ENCODE measurements at regions of chr1 and their contacts with region 1.

Region 1: DNA sequence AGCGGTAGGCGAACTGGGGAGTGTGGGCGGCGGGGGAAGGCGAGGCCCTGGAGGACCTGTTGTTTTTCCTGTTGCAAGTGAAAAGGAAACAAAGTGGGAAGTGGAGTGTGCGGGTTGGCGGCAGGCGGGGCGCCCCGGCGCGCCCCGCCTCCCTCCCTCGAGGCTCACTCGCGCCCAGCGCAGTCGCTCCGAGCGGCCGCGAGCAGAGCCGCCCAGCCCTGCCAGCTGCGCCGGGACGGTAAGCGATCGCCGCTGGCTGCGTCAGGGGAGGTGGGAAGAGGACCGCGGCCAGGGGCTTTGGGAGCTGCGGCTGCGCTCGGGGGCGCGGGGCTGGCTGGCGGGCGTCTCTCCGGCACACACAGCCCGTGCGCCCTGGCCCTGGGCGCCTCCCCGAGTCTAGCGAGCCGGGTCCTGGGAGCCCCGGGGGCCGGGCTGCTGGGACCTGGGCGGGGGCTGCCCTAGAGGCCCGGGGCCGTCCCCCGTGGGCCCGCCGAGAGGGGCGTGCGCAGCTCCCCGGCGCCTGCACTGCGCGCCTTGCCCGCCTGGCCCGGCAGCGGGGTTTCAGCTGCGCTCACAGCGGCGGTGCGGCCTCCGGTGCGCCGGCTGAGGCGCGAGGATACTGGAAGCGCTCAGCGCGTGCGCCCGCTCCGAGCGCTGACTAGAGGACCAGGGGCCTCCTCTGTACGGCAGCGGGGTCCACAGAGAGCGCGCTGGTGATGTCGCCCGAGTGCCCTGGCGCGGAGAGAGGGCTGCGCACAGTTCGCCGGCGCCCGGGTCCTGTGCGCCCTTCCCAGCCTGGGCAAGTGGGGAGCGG is at the start of gene PIK3CD:
- DNase-seq: peak; percentile 31
- H3K4me3 Mint-ChIP-seq: peak within 1 kb of the TSS; percentile 95
- H3K27ac Mint-ChIP-seq: peak within 1 kb of the TSS; percentile 97
- H3K4me1 Mint-ChIP-seq: peaks cover 45% of the 10 kb centered on the region
- H3K27me3 Mint-ChIP-seq: no peaks in the 10 kb centered on the region
- total RNA-seq, gene PIK3CD: 287 and 291 TPM in 2 replicates

Region 2: DNA sequence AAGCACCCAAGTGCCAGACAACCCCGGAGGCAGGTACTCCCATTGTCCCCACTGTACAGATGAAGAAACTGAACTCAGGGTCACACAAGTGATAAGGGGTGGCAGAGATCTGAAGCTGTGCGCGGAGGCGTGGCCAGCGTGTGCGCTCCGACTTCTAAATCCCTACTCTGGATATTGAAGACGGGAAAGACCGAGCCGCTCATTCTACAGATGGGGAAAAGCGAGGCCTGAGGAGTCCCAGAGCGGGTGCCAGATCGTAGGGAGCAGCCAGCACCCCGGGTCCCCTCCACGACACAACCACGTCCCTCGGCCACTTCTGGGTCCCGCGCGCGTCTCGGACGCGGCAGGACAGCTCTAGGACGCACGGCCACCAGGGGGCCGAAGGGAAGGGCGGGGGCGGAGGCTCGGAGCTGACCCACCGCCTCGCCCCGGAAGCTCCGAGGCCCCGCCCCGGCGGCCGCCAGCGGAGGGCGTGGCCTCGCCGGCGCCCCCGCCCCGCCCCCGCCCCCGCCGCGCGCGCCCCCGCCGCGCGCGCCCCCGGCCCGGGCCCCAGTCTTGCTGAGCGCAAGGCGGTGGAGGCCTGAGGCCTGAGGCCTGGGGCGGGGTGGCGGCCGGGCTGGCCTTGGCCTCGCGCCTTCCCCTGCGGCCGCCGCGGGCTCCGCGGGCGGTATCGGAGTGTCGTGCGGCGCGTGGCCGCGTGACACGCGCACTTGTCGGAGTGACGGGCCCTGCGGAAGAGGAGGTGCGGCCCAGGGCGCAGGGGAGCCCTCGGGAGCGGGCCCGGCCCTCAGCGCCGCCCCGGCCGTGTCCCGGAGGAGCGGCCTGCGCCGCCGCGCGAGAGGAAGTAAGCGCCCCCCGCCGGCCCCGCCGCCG is 417.3 kb before region 1 on chr1 and contains the start of gene H6PD:
- intact Hi-C with region 1: loop called (anchors 10 kb)
- DNase-seq: peak; percentile 82
- H3K4me3 Mint-ChIP-seq: peak within 1 kb of the TSS; percentile 94
- H3K27ac Mint-ChIP-seq: peak within 1 kb of the TSS; percentile 98
- H3K4me1 Mint-ChIP-seq: peaks cover 36% of the 10 kb centered on the region
- H3K27me3 Mint-ChIP-seq: peaks cover 3% of the 10 kb centered on the region
- total RNA-seq, gene H6PD: 15.7 TPM in 2 replicates

Region 3: GRCh38 chr1:9275567-9276034 is 376.2 kb before region 1 on chr1:
- intact Hi-C with region 1: no loop called
- DNase-seq: peak; percentile 58
- H3K4me3 Mint-ChIP-seq: peak overlapping the region; percentile 45
- H3K27ac Mint-ChIP-seq: peak overlapping the region; percentile 65
- H3K4me1 Mint-ChIP-seq: peaks cover 39% of the 10 kb centered on the region
- H3K27me3 Mint-ChIP-seq: peaks cover 2% of the 10 kb centered on the region

Region 4: GRCh38 chr1:9588551-9589143 is 63.1 kb before region 1 on chr1 and contains the start of gene TMEM201:
- intact Hi-C with region 1: loop called (anchors 2 kb)
- DNase-seq: peak; percentile 94
- H3K4me3 Mint-ChIP-seq: peak within 1 kb of the TSS; percentile 72
- H3K27ac Mint-ChIP-seq: peak within 1 kb of the TSS; percentile 48
- H3K4me1 Mint-ChIP-seq: peaks cover 30% of the 10 kb centered on the region
- H3K27me3 Mint-ChIP-seq: no peaks in the 10 kb centered on the region
- total RNA-seq, gene TMEM201: 36.7 and 38.7 TPM in 2 replicates

Region 5: GRCh38 chr1:9689011-9689706 is 37.4 kb after region 1 on chr1:
- intact Hi-C with region 1: loop called (anchors 1 kb)
- DNase-seq: peak; percentile 71
- H3K4me3 Mint-ChIP-seq: peak overlapping the region; percentile 75
- H3K27ac Mint-ChIP-seq: peak overlapping the region; percentile 70
- H3K4me1 Mint-ChIP-seq: peaks cover 59% of the 10 kb centered on the region
- H3K27me3 Mint-ChIP-seq: no peaks in the 10 kb centered on the region

Region 6: GRCh38 chr1:9728451-9729295 is 76.9 kb after region 1 on chr1:
- intact Hi-C with region 1: loop called (anchors 1 kb)
- DNase-seq: peak; percentile 54
- H3K4me3 Mint-ChIP-seq: peak overlapping the region; percentile 72
- H3K27ac Mint-ChIP-seq: peak overlapping the region; percentile 83
- H3K4me1 Mint-ChIP-seq: peaks cover 56% of the 10 kb centered on the region
- H3K27me3 Mint-ChIP-seq: no peaks in the 10 kb centered on the region

Region 7: DNA sequence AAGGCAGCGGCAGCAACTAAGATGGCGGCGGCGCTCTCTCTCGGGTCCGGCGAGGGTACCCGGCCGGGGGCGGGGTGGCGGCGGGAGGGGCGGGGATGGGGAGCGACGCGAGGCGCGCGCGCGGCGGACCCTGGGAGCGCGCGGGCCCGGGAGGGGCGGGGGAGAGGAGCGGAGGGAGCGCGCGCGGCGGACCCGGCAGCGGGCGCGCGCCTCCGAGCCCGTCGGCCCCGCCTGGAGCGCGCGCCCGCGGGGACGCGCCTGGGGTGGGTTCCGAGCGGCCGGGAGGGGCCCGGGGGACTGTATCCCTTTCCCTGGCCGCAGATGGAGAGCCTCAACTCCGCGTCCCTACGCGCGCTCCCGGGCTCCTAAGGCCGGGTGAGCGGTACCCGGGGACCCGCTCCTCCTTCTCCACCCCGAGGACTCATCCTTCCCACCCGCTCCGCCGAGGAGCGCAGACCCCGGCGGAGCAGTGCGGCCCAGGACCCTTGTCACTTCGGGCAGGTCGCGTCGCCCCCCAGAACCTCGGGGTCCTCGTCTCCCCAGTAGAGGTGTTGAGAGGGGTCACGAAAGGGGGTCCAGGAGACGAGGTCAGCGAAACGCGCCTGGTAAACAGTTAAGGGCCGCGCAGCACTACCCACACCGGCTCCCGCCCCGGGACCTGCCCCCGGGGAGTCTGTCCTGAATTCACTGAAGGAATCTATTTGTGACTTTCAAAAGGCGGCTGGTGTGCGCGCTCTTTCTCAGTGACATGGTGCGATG is 172.3 kb after region 1 on chr1 and contains the start of gene CLSTN1:
- intact Hi-C with region 1: loop called (anchors 2 kb)
- DNase-seq: peak; percentile 83
- H3K4me3 Mint-ChIP-seq: peak within 1 kb of the TSS; percentile 97
- H3K27ac Mint-ChIP-seq: peak within 1 kb of the TSS; percentile 84
- H3K4me1 Mint-ChIP-seq: peaks cover 40% of the 10 kb centered on the region
- H3K27me3 Mint-ChIP-seq: peaks cover 6% of the 10 kb centered on the region
- total RNA-seq, gene CLSTN1: 48.0 and 48.6 TPM in 2 replicates

Region 8: DNA sequence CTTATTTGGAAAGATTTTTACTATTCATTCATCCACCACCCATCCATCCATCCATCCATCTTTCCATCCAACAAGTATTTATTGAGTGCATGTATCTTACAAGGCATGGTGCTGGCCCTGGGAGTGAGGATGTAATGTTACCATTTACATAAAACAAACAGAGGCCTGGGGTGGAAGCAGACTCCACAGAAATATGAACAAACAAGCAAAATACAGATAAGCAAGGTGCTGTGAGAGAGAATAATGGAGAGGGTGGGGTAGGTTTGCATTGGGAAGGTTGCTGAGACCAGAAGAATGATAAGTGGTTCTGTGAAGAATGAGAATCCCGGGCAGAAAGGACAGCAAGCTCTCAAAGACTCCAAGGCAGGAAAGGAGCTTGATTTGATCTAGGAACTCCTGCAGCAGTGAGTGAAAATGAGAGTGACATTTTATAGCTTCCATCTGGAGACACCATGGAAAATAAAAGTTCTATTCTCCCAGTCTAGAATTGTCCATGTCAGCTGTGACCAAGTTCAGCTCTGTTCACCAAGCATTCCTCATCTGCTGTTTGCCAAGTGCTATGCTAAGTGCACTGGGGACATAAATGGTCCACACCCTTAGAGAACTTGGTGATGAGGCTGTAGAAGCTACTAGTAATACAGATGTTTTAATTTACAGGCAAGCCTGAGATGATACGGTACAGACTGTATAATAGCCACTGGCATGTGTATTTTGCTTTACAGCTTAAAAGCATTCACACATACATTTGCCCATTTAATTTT is 898.3 kb after region 1 on chr1:
- intact Hi-C with region 1: no loop called
- DNase-seq: no peak
- H3K4me3 Mint-ChIP-seq: no peak overlapping the region
- H3K27ac Mint-ChIP-seq: no peak overlapping the region
- H3K4me1 Mint-ChIP-seq: peaks cover 7% of the 10 kb centered on the region
- H3K27me3 Mint-ChIP-seq: no peaks in the 10 kb centered on the region

Measured in activated T-helper 1 cell treated with anti-CD3 and anti-CD28 coated beads, Interleukin-12 subunit alpha, Interleukin-12 subunit beta, Interleukin-2, Interleukin-4 antibody, amounts not matched to agents 30 ng/mL and 10 ng/mL and 1 ng/mL, durations not matched to agents 14 hours and 24 hours and 36 hours (primary cell).